ENCODE measurements at regions of chr12 and their contacts with region 1.

Region 1: GRCh38 chr12:91109148-91109564 is 2.1 kb downstream of the LUM start:
- ATAC-seq: peak in 4 of 8 experiments; percentile 34 to 95 (median 85)
- H3K4me3 ChIP-seq: no peak overlapping the region
- H3K27ac ChIP-seq: no peak overlapping the region
- H3K4me1 ChIP-seq: peaks cover 3 to 5% of the 10 kb centered on the region in 2 donors

Region 2: DNA sequence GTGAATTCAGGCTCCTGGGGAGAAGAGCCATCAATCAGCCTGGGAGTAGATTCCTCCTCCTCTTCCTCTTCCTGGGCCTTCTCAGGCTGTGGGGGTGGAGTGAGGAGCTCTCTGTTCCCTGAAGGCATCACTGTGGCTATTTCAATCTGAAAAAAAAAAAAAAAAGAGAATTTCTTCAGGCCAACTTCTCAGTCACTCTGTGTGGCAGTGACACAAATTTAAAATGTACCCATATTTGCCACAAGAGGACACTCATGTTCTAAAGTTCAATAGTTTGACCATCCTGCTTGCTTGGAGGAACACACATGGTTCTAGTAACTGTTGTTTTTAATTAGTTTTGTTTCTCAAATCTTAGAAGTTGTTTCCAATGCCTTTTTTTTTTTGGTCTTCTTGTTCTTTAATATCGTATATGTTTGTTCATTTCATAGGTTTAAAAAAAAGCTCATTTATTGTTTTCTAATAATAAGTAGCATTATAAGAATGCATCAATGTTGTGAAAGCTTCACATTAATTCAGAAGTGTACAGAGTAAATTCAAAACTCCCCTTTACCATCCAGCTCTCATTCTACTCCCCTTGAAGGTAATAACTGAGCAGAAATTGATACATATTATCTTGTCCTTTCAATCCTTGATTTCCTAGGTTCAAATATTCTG is 130.9 kb before region 1 on chr12:
- in situ Hi-C with region 1: loop called in 2 of 9 experiments (anchors 25 kb)
- ATAC-seq: peak in 6 of 8 experiments; percentile 52 to 93 (median 84)
- H3K4me3 ChIP-seq: no peak overlapping the region
- H3K27ac ChIP-seq: no peak overlapping the region
- H3K4me1 ChIP-seq: no peaks in the 10 kb centered on the region